ENCODE measurements at regions of chr2 and their contacts with region 1.

Region 1: GRCh38 chr2:192162392-192163042 is 32.2 kb downstream of the TMEFF2 start:
- DNase-seq: peak; percentile 33 to 83
- ATAC-seq: peak; percentile 62 to 79 (median 69)
- H3K4me3 ChIP-seq: no peak overlapping the region
- H3K4me3 Mint-ChIP-seq: peak overlapping the region; percentile 41
- H3K27ac ChIP-seq: no peak overlapping the region
- H3K27ac Mint-ChIP-seq: no peak overlapping the region
- H3K4me1 ChIP-seq: no peaks in the 10 kb centered on the region
- H3K4me1 Mint-ChIP-seq: peaks cover 11 to 14% of the 10 kb centered on the region in 2 donors
- H3K27me3 ChIP-seq: peaks cover 2% of the 10 kb centered on the region
- H3K27me3 Mint-ChIP-seq: peaks cover 2 to 12% of the 10 kb centered on the region in 2 donors
- CTCF ChIP-seq: peak; percentile 95

Region 2: DNA sequence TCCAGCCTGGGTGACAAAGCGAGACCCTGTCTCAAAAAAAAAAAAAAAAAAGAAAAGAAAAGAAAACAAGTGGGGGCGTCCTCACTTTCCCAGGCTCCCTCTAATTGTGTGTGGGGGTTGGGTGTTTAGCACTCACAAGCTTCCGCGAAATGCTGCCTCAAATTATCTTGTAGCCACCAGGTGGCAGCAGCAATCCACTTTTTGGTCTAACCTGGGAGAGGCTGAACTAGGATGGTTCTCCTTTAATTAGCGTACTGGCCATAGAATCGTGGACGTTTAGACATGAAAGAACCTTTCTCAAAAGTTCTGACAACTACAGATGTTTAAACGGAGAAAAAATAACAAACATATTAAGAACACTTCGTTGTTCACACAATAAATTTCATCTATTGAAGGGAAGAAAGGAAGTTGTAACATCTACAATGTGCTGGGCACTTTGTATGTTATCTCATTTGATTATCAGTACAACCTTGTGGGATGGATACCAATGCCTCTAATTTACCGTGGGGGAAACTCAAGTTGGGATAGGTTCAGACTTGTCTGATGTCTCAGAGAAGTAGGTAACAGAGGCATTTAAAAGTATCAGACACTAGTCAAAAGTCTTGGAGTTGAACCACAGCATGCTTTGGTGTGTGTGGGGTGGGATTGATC is 607.3 kb before region 1 on chr2:
- intact Hi-C with region 1: loop called (anchors 1 kb)
- DNase-seq: peak; percentile 72 to 88
- ATAC-seq: peak; percentile 87 to 99 (median 96)
- H3K4me3 ChIP-seq: no peak overlapping the region
- H3K4me3 Mint-ChIP-seq: no peak overlapping the region
- H3K27ac ChIP-seq: no peak overlapping the region
- H3K27ac Mint-ChIP-seq: no peak overlapping the region
- H3K4me1 ChIP-seq: no peaks in the 10 kb centered on the region
- H3K4me1 Mint-ChIP-seq: peaks cover 5% of the 10 kb centered on the region in 2 donors
- H3K27me3 ChIP-seq: no peaks in the 10 kb centered on the region
- H3K27me3 Mint-ChIP-seq: peaks cover 29 to 48% of the 10 kb centered on the region in 2 donors
- CTCF ChIP-seq: peak; percentile 77

Region 3: GRCh38 chr2:191758518-191759507 is 403.7 kb before region 1 on chr2:
- intact Hi-C with region 1: loop called (anchors 2 kb)
- DNase-seq: peak; percentile 34 to 70
- ATAC-seq: peak; percentile 91 to 99 (median 96)
- H3K4me3 ChIP-seq: no peak overlapping the region
- H3K4me3 Mint-ChIP-seq: no peak overlapping the region
- H3K27ac ChIP-seq: no peak overlapping the region
- H3K27ac Mint-ChIP-seq: no peak overlapping the region
- H3K4me1 ChIP-seq: peaks cover 3% of the 10 kb centered on the region
- H3K4me1 Mint-ChIP-seq: no peaks in the 10 kb centered on the region
- H3K27me3 ChIP-seq: peaks cover 2% of the 10 kb centered on the region
- H3K27me3 Mint-ChIP-seq: peaks cover 0 to 9% of the 10 kb centered on the region in 2 donors
- CTCF ChIP-seq: peak; percentile 69

Region 4: DNA sequence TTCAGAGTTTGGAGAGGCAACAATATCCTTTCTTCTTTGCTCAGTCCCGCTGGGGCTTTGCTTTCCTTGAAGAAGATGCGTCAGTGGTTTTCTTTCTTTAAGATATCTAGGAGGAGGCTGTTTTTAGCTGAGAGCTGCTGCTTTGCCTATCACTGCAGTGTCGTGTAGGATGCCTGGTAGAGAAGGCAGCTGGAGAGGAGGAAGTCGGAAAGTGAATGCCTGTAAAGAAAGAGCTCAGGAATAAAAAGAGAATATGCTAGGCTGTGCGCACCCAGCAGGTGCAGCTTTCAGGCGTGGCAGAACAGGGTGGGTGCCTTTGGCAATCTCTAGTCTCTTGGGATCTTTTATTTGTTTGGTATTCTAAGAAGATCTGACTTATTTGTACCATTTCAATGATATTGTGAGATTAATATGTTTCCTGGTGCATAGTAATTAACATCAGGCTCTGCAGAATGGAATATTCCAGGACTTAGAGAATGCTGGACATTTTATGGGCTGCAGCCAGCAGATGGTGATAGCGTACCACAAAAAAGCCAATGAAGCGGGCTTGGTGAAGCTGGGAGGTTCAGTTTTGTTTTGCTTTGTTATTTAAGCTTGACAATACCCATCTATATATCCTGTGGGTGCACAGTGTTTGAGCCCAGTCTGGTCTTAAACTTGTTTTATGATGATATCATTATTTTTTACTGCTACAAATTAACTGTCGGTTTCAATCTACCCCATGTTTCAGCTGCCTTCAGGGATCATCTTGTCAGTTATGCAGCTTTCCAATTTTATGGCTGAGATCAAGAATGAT is 350.5 kb before region 1 on chr2:
- intact Hi-C with region 1: loop called (anchors 1 kb)
- DNase-seq: peak; percentile 27 to 51
- ATAC-seq: peak in 2 of 3 donors; percentile 55 to 66
- H3K4me3 ChIP-seq: no peak overlapping the region
- H3K4me3 Mint-ChIP-seq: no peak overlapping the region
- H3K27ac ChIP-seq: no peak overlapping the region
- H3K27ac Mint-ChIP-seq: no peak overlapping the region
- H3K4me1 ChIP-seq: no peaks in the 10 kb centered on the region
- H3K4me1 Mint-ChIP-seq: no peaks in the 10 kb centered on the region
- H3K27me3 ChIP-seq: no peaks in the 10 kb centered on the region
- H3K27me3 Mint-ChIP-seq: peaks cover under 1 to 7% of the 10 kb centered on the region in 2 donors
- CTCF ChIP-seq: peak; percentile 50

Region 5: DNA sequence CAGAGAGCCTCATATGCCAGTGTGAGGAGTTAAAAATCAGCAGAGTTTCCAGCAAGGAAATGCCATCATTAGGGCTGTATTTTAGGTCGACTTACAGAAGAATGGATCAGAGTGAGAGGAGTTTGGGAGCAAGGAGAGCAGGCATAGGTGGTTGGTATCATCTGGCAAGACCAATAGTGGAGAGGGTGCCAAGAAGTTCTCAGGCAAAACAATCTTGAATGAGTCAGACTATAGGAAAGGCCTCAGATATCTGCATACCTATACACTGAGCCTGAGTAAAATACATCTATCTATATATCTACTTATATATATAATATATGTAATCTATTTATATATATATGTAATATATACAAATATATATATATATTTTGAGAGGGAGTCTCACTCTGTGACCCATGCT is 25.1 kb before region 1 on chr2:
- intact Hi-C with region 1: no loop called
- DNase-seq: no peak
- ATAC-seq: peak in 1 of 3 donors; percentile 39
- H3K4me3 ChIP-seq: no peak overlapping the region
- H3K4me3 Mint-ChIP-seq: no peak overlapping the region
- H3K27ac ChIP-seq: no peak overlapping the region
- H3K27ac Mint-ChIP-seq: no peak overlapping the region
- H3K4me1 ChIP-seq: no peaks in the 10 kb centered on the region
- H3K4me1 Mint-ChIP-seq: no peaks in the 10 kb centered on the region
- H3K27me3 ChIP-seq: no peaks in the 10 kb centered on the region
- H3K27me3 Mint-ChIP-seq: peaks cover 6 to 11% of the 10 kb centered on the region in 2 donors
- CTCF ChIP-seq: no peak

Measured in natural killer cell (primary cell).